Activated CD4-positive, alpha-beta memory T cell treated with anti-CD3 and anti-CD28 coated beads for 36 hours (primary cell): ENCODE measurements at regions of chr11 and their contacts with region 1.

Region 1: GRCh38 chr11:60305906-60306619 is 21.0 kb upstream of the MS4A6E start:
- DNase-seq: no peak
- H3K4me3 Mint-ChIP-seq: no peak overlapping the region
- H3K27ac Mint-ChIP-seq: no peak overlapping the region
- H3K4me1 Mint-ChIP-seq: peaks cover 2% of the 10 kb centered on the region
- H3K27me3 Mint-ChIP-seq: peaks cover 25% of the 10 kb centered on the region

Region 2: GRCh38 chr11:60175860-60176275 is 130.2 kb before region 1 on chr11:
- CTCF ChIA-PET with region 1: no interaction called
- POLR2A ChIA-PET with region 1: no interaction called
- intact Hi-C with region 1: loop called (anchors 10 kb)
- DNase-seq: peak; percentile 30
- H3K4me3 Mint-ChIP-seq: no peak overlapping the region
- H3K27ac Mint-ChIP-seq: no peak overlapping the region
- H3K4me1 Mint-ChIP-seq: peaks cover 7% of the 10 kb centered on the region
- H3K27me3 Mint-ChIP-seq: peaks cover 27% of the 10 kb centered on the region